ENCODE measurements at regions of chr10 and their contacts with region 1.

Region 1: GRCh38 chr10:58781873-58782488 is 269.3 kb downstream of the BICC1 start:
- DNase-seq: peak; percentile 42
- ATAC-seq: peak; percentile 72
- H3K4me3 ChIP-seq: no peak overlapping the region
- H3K27ac ChIP-seq: no peak overlapping the region
- H3K4me1 ChIP-seq: peaks cover 8% of the 10 kb centered on the region; the same call in 1 of the 2 replicates
- H3K27me3 ChIP-seq: no peaks in the 10 kb centered on the region
- CTCF ChIP-seq: peak; percentile 75
- EP300 ChIP-seq: no peak
- POLR2A ChIP-seq: no peak
- RAD21 ChIP-seq: peak; percentile 39; the same call in 1 of the 2 replicates

Region 2: DNA sequence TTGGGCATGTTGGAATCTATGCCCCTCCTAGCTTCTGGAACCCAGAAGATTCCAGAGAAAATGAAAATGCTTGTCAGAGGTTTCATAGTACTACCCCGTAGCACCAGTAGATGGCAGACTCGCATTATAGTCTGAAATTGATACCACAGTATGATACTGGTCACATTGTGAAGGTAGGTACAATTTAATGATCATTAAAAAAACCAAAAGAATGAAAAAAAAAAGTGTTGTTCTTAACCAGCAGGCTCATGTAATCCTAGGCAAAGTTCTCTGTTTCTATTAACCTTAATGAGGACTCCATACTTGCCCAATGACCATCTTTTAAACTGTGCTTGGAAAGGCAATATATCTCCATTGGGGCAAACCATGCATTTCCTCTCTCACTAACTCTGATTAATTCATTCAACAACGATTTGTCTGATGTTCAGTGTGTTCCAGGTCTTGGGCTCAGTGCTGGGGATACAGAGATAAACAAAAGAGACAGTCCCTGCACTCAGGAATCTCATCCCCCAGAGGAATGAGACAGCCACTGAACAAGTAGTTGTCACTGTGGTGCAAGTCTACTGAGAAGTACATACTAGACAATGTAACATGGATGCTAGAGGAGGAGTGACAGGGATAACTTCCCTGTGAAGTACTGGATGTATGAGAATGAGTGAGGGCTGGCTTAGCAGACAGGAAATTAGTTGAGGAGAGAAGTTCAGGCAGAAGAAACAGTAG is 170.9 kb after region 1 on chr10:
- CTCF ChIA-PET with region 1: no interaction called
- POLR2A ChIA-PET with region 1: no interaction called
- in situ Hi-C with region 1: no loop called
- intact Hi-C with region 1: loop called (anchors 10 kb)
- DNase-seq: peak; percentile 53
- ATAC-seq: peak; percentile 86
- H3K4me3 ChIP-seq: no peak overlapping the region
- H3K27ac ChIP-seq: no peak overlapping the region
- H3K4me1 ChIP-seq: peaks cover 58% of the 10 kb centered on the region
- H3K27me3 ChIP-seq: no peaks in the 10 kb centered on the region
- CTCF ChIP-seq: peak; percentile 82
- EP300 ChIP-seq: no peak
- POLR2A ChIP-seq: no peak
- RAD21 ChIP-seq: peak; percentile 87

Region 3: DNA sequence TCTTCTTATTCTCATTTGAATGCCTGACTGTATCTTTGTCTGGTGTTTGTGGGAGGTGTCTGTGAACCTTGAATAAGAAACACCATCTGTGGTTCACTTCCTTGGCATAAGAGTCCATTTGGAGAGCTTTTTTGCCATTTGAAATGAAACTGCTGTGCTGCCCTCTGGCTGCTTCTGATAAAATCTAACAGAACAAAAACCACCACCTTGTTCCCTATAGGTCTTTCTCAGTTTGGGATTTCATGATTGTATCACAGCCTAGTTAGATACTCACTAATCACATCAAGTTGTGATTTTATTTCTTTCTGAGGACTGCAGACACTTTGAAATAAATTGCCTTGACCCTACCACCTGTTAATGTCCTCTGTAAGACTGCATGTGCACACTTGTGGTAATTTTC is 683.1 kb after region 1 on chr10:
- CTCF ChIA-PET with region 1: no interaction called
- POLR2A ChIA-PET with region 1: no interaction called
- in situ Hi-C with region 1: no loop called
- intact Hi-C with region 1: loop called (anchors 1 kb)
- DNase-seq: peak; percentile 4
- ATAC-seq: no peak
- H3K4me3 ChIP-seq: no peak overlapping the region
- H3K27ac ChIP-seq: no peak overlapping the region
- H3K4me1 ChIP-seq: no peaks in the 10 kb centered on the region
- H3K27me3 ChIP-seq: no peaks in the 10 kb centered on the region; a peak in 1 of 5 replicates
- CTCF ChIP-seq: peak; percentile 56
- EP300 ChIP-seq: no peak
- POLR2A ChIP-seq: no peak
- RAD21 ChIP-seq: no peak

Region 4: GRCh38 chr10:59808896-59809643 is 1027.1 kb after region 1 on chr10:
- CTCF ChIA-PET with region 1: no interaction called
- POLR2A ChIA-PET with region 1: no interaction called
- in situ Hi-C with region 1: loop called (anchors 25 kb)
- intact Hi-C with region 1: loop called (anchors 1 kb)
- DNase-seq: peak; percentile 64
- ATAC-seq: peak; percentile 98
- H3K4me3 ChIP-seq: no peak overlapping the region
- H3K27ac ChIP-seq: no peak overlapping the region
- H3K4me1 ChIP-seq: no peaks in the 10 kb centered on the region
- H3K27me3 ChIP-seq: no peaks in the 10 kb centered on the region
- CTCF ChIP-seq: peak; percentile 90
- EP300 ChIP-seq: no peak
- POLR2A ChIP-seq: no peak
- RAD21 ChIP-seq: peak; percentile 67